ENCODE measurements at regions of chr9 and their contacts with region 1.

Region 1: GRCh38 chr9:69672596-69673310 is 582 bp upstream of the APBA1 start:
- DNase-seq: peak; percentile 81
- H3K4me3 Mint-ChIP-seq: peak overlapping the region; percentile 69
- H3K27ac Mint-ChIP-seq: no peak overlapping the region
- H3K4me1 Mint-ChIP-seq: peaks cover 16% of the 10 kb centered on the region
- H3K27me3 Mint-ChIP-seq: peaks cover 22% of the 10 kb centered on the region

Region 2: DNA sequence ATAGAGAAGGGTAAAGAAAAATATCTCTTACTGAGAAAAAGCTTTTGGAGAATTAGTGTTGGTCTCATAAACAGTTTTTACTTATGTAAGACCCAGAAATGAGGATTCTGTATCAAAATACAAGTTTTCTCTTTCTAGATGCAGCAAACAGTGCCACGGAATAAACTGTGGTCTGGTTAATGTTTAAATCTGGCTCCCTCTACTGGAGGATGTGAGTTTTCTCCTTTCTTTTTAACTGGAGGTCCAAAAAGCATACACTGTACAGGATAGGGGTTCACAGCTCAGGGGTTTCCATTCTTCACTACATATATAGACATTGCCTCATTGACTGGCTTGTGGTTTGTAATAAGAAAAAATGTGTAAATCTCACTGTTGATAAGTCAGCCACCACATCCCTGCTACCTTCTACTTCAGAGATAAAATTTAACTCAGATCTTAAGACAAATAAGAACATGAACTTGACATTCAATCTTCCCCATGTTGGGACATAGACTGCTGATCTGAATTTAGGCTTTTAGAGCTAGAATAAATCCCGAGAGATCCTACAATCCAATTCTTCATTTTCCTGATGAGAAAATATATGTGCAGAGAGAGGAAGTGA is 246.8 kb after region 1 on chr9:
- CTCF ChIA-PET with region 1: interaction called, 10 read pairs
- POLR2A ChIA-PET with region 1: no interaction called
- intact Hi-C with region 1: loop called (anchors 1 kb)
- DNase-seq: no peak
- H3K4me3 Mint-ChIP-seq: no peak overlapping the region
- H3K27ac Mint-ChIP-seq: no peak overlapping the region
- H3K4me1 Mint-ChIP-seq: no peaks in the 10 kb centered on the region
- H3K27me3 Mint-ChIP-seq: peaks cover 3% of the 10 kb centered on the region